ENCODE measurements at regions of chr12 and their contacts with region 1.

Region 1: GRCh38 chr12:1795785-1796514 is 24.4 kb upstream of the LRTM2 start:
- DNase-seq: peak; percentile 83 to 99 (median 90)

Region 2: GRCh38 chr12:1650260-1650977 is 145.5 kb before region 1 on chr12:
- intact Hi-C with region 1: loop called (anchors 1 kb)
- DNase-seq: no peak

Region 3: DNA sequence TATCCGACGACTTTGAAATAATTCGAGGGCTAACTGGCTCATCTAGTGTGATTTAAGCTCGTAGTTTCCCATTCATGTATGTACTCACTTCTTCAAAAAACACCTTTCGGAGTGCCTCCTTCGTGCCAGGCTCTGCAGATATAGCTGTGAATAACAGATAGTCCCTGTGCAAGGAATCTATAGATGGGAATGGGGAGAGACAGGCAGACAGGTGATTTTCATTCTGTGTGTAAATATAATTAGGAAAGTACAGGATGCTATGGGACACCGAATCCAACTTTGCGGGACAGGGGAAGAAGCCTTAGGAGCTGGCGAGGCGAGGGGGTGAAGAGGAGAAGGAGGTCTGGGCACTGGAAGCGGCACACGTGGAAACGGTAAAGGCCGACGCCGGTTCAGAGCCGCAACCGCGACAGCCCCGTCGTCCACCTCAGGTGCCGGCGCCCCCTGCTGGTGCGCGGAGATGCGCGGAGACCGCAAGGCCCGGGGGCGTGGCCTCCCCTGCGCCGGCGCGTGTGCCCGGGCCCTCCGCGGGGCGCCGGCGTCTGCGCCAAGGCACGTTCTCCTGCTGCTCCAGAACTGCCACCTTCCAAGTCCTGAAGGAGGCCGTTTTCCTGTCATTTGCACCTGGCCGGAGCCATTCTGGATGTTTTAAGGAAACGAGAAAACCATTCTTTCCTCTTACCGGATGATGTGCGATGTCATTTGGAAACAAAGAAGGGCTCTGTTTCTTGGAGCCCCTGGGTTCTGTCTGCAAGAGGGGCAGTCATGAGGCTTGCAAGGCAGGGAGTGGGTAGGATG is 238.9 kb after region 1 on chr12:
- intact Hi-C with region 1: loop called (anchors 2 kb)
- DNase-seq: peak; percentile 74 to 98 (median 90)

Measured in posterior cingulate gyrus (tissue), 11 donors.